GM12878 (cell line): ENCODE measurements at regions of chr5 and their contacts with region 1.

Region 1: GRCh38 chr5:89313804-89314588 is 431.0 kb upstream of the MEF2C start:
- DNase-seq: peak; percentile 99
- ATAC-seq: peak; percentile 96
- H3K4me3 ChIP-seq: no peak overlapping the region
- H3K27ac ChIP-seq: peak overlapping the region; percentile 97
- H3K4me1 ChIP-seq: peaks cover 40% of the 10 kb centered on the region
- H3K27me3 ChIP-seq: no peaks in the 10 kb centered on the region
- CTCF ChIP-seq: no peak
- EP300 ChIP-seq: peak; percentile 95 to 98
- POLR2A ChIP-seq: peak; percentile 36; the same call in 1 of the 2 replicates
- RAD21 ChIP-seq: peak; percentile 40

Region 2: GRCh38 chr5:88474574-88474973 is 839.4 kb before region 1 on chr5:
- CTCF ChIA-PET with region 1: no interaction called
- POLR2A ChIA-PET with region 1: no interaction called
- RAD21 ChIA-PET with region 1: no interaction called
- SMC1A ChIA-PET with region 1: no interaction called
- in situ Hi-C with region 1: no loop called
- intact Hi-C with region 1: no loop called
- DNase-seq: no peak
- ATAC-seq: no peak
- H3K4me3 ChIP-seq: no peak overlapping the region
- H3K27ac ChIP-seq: no peak overlapping the region
- H3K4me1 ChIP-seq: no peaks in the 10 kb centered on the region
- H3K27me3 ChIP-seq: no peaks in the 10 kb centered on the region
- CTCF ChIP-seq: no peak
- EP300 ChIP-seq: no peak
- POLR2A ChIP-seq: no peak
- RAD21 ChIP-seq: no peak

Region 3: DNA sequence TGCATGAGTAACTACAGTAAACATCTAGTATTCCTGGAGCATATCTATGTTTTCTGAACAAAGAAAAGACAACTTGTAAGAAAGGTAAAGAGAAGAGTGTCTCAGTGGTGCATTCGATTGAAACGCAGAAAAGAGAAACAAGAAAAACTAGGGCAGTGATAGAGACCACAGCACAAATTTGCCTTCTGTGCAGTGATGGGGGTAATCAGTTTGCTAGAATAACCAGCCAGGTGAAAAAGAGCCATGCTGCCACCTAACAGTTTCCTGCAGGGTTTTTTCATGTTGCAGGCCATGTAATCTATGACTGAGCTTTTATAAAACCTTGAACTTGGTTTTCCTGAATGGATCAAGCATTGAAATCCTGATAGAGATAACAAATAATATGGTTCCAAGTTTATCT is 232.6 kb before region 1 on chr5:
- CTCF ChIA-PET with region 1: no interaction called
- POLR2A ChIA-PET with region 1: no interaction called
- RAD21 ChIA-PET with region 1: interaction called, 10 read pairs
- SMC1A ChIA-PET with region 1: interaction called, 3 read pairs
- in situ Hi-C with region 1: no loop called
- intact Hi-C with region 1: no loop called
- DNase-seq: peak; percentile 62
- ATAC-seq: peak; percentile 89
- H3K4me3 ChIP-seq: peak overlapping the region; percentile 3; the same call in 1 of the 2 replicates
- H3K27ac ChIP-seq: peak overlapping the region; percentile 55
- H3K4me1 ChIP-seq: peaks cover 11% of the 10 kb centered on the region
- H3K27me3 ChIP-seq: no peaks in the 10 kb centered on the region
- CTCF ChIP-seq: peak in 1 of 3 experiments; percentile 36; a peak in 2 of 6 replicates
- EP300 ChIP-seq: 0 out of 4 replicates have a peak, but pooled peaks of 1 of the 2 experiments have one; percentile 21
- POLR2A ChIP-seq: no peak
- RAD21 ChIP-seq: peak; percentile 54

Region 4: GRCh38 chr5:89128092-89128491 is 185.9 kb before region 1 on chr5:
- CTCF ChIA-PET with region 1: no interaction called
- POLR2A ChIA-PET with region 1: no interaction called
- RAD21 ChIA-PET with region 1: no interaction called
- SMC1A ChIA-PET with region 1: no interaction called
- in situ Hi-C with region 1: no loop called
- intact Hi-C with region 1: no loop called
- DNase-seq: no peak
- ATAC-seq: no peak
- H3K4me3 ChIP-seq: no peak overlapping the region
- H3K27ac ChIP-seq: no peak overlapping the region
- H3K4me1 ChIP-seq: no peaks in the 10 kb centered on the region
- H3K27me3 ChIP-seq: no peaks in the 10 kb centered on the region
- CTCF ChIP-seq: no peak
- EP300 ChIP-seq: no peak
- POLR2A ChIP-seq: no peak
- RAD21 ChIP-seq: no peak

Region 5: DNA sequence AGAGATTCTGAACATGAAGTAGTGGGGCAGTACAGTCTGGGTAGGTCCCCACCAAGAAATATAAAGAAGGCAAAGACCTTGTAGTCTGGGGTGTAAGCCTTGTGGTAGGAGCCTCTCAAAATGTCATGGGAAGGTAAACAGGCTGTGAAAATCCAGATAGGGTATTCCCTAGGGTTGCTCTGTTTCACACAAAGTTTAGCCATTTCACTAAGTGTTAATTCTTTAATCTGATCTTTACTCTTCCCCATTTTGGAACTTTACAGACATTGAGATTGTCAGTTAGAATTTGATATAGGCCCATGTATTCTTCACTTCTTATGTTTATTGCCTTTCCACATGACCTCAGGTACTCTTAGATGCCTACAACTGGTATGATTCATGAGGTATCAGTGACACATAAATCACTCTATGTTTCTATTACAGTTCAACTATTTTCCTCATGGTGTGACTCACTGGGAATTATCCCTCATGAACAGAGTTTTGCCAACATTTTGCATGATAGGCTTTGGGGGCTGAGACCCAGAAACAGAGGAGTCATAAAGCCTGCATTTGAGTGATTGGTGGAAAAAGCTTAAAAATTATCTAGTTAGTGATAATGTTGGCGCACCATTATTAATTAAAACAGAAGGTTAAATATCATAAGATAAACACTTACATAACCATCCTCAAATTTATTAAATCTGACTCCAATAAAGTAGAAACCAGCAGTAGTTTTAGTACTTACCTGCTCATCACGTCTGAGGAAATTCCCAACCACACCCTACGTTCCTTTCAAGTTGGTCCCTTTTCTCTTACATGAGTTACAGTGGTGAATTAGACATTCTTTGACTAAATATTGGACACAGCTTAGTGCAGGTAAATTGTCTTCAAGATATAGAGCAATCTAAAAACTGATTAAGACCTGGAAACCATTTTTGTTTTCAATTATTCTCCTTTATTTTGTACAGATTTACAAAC is 31.2 kb before region 1 on chr5:
- CTCF ChIA-PET with region 1: interaction called, 5 read pairs
- POLR2A ChIA-PET with region 1: interaction called, 4 read pairs
- RAD21 ChIA-PET with region 1: interaction called, 7 read pairs
- SMC1A ChIA-PET with region 1: interaction called, 18 read pairs
- in situ Hi-C with region 1: no loop called
- intact Hi-C with region 1: no loop called
- DNase-seq: peak; percentile 31
- ATAC-seq: peak; percentile 54
- H3K4me3 ChIP-seq: no peak overlapping the region
- H3K27ac ChIP-seq: peak overlapping the region; percentile 59
- H3K4me1 ChIP-seq: peaks cover 40% of the 10 kb centered on the region
- H3K27me3 ChIP-seq: no peaks in the 10 kb centered on the region
- CTCF ChIP-seq: no peak
- EP300 ChIP-seq: peak in 1 of 2 experiments; percentile 30; a peak in 1 of 4 replicates
- POLR2A ChIP-seq: no peak
- RAD21 ChIP-seq: peak; percentile 1; the same call in 1 of the 2 replicates

Region 6: DNA sequence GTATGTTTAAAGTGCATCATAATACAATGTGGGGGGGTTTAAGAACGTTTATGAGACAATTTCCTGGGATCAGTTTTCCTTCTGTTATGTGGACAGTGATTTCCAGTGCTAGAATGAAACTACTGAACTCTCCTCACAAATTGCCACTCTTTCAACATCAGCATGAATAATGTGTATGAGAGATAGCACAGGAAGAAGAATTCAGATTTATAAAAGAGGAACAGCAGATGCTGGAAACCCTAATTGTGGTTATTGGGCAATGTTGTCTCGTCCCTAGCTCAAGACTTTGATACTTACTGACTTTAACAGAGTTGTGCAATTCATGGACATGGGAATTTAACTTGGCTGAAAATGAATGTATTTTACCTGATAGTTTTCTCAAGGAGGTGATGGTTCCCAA is 20.2 kb before region 1 on chr5:
- CTCF ChIA-PET with region 1: interaction called, 3 read pairs
- POLR2A ChIA-PET with region 1: interaction called, 6 read pairs
- RAD21 ChIA-PET with region 1: interaction called, 64 read pairs
- SMC1A ChIA-PET with region 1: interaction called, 11 read pairs
- in situ Hi-C with region 1: no loop called
- intact Hi-C with region 1: no loop called
- DNase-seq: no peak
- ATAC-seq: peak; percentile 34; the same call in 1 of the 3 replicates
- H3K4me3 ChIP-seq: no peak overlapping the region
- H3K27ac ChIP-seq: no peak overlapping the region
- H3K4me1 ChIP-seq: peaks cover 12% of the 10 kb centered on the region; the same call in 1 of the 2 replicates
- H3K27me3 ChIP-seq: no peaks in the 10 kb centered on the region
- CTCF ChIP-seq: no peak
- EP300 ChIP-seq: no peak
- POLR2A ChIP-seq: no peak
- RAD21 ChIP-seq: no peak

Region 7: DNA sequence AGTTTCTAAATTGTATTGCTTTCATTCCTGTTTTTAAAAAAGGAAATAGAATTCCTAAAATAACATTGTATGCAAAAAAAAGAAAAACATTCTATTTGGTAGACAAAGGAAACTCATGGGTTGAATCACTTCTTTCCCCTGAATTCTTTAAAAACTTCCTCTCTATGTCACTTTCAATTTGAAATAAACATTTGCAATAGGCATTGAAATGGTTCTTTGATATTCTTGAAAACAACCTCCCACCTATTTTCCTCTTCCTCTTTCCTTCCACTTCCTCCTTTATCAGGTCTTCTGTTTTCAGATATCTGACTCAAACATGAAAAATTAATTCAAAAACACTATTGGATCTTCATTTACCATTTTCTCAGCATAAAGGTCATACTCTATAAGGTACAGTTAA is 11.0 kb after region 1 on chr5:
- CTCF ChIA-PET with region 1: interaction called, 12 read pairs
- POLR2A ChIA-PET with region 1: interaction called, 3 read pairs
- RAD21 ChIA-PET with region 1: interaction called, 3 read pairs
- SMC1A ChIA-PET with region 1: interaction called, 24 read pairs
- in situ Hi-C with region 1: no loop called
- intact Hi-C with region 1: no loop called
- DNase-seq: no peak
- ATAC-seq: no peak
- H3K4me3 ChIP-seq: no peak overlapping the region
- H3K27ac ChIP-seq: no peak overlapping the region
- H3K4me1 ChIP-seq: peaks cover 6% of the 10 kb centered on the region
- H3K27me3 ChIP-seq: no peaks in the 10 kb centered on the region
- CTCF ChIP-seq: no peak
- EP300 ChIP-seq: no peak
- POLR2A ChIP-seq: no peak
- RAD21 ChIP-seq: no peak

Region 8: DNA sequence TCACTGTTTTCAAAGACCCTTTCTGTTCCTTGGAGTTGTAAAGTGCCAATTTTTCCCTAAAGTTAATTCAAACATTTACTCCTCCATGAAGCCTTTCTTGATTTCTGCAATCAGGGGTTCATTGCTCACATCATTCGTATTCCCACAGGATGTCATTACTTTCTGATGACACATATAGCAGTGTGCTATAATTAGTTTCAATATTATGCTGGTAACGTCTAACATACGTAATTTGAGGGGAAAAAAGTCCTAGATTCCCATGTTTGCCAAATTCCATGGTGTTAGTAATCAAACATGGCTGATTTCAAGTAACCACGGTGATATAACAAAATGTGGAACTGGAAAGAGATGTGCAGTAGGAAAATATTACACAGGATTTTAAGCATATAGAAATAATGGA is 37.2 kb after region 1 on chr5:
- CTCF ChIA-PET with region 1: interaction called, 6 read pairs
- POLR2A ChIA-PET with region 1: interaction called, 3 read pairs
- RAD21 ChIA-PET with region 1: interaction called, 17 read pairs
- SMC1A ChIA-PET with region 1: interaction called, 25 read pairs
- in situ Hi-C with region 1: no loop called
- intact Hi-C with region 1: no loop called
- DNase-seq: no peak
- ATAC-seq: peak; percentile 16
- H3K4me3 ChIP-seq: no peak overlapping the region
- H3K27ac ChIP-seq: peak overlapping the region; percentile 68; the same call in 1 of the 2 replicates
- H3K4me1 ChIP-seq: peaks cover 18% of the 10 kb centered on the region; the same call in 1 of the 2 replicates
- H3K27me3 ChIP-seq: no peaks in the 10 kb centered on the region
- CTCF ChIP-seq: no peak
- EP300 ChIP-seq: 0 out of 4 replicates have a peak, but pooled peaks of 1 of the 2 experiments have one; percentile 54
- POLR2A ChIP-seq: no peak
- RAD21 ChIP-seq: no peak

Region 9: DNA sequence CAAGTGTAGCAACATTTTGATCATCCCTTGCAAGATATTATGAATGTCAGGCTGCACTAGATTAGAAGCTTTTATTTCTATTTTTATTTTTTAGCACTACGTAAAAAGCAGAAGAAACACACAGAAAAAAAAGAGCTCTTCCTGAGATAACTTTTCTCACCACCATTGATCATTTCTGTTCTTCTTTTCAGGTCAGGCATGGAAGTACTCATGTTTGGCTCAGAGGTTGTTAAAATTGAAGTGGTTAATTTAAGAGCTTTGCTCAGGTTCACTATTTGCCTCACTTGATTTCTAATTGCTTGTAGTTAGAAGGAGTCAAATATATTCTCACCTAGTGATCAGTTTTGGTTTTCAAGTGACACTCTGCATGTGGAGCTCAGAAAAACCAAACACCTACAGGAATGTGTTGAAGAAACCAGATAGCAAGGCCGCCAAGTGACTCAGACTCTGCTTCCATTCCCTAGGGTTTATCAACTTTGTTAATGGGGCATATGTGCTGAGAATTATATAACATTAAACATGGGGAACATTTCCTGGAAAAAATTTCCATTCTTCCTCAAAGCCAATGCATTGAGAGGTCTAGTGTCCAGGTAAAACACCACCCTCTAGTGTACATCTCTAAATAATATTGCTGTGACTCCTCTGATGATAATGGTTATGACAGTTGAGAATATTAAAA is 415.8 kb after region 1 on chr5:
- CTCF ChIA-PET with region 1: interaction called, 10 read pairs
- POLR2A ChIA-PET with region 1: no interaction called
- RAD21 ChIA-PET with region 1: interaction called, 13 read pairs
- SMC1A ChIA-PET with region 1: interaction called, 11 read pairs
- in situ Hi-C with region 1: no loop called
- intact Hi-C with region 1: no loop called
- DNase-seq: peak; percentile 34
- ATAC-seq: peak; percentile 76
- H3K4me3 ChIP-seq: no peak overlapping the region
- H3K27ac ChIP-seq: no peak overlapping the region
- H3K4me1 ChIP-seq: peaks cover 7% of the 10 kb centered on the region; the same call in 1 of the 2 replicates
- H3K27me3 ChIP-seq: no peaks in the 10 kb centered on the region
- CTCF ChIP-seq: peak; percentile 26 to 54 (median 27); a peak in 4 of 6 replicates
- EP300 ChIP-seq: no peak
- POLR2A ChIP-seq: no peak
- RAD21 ChIP-seq: peak; percentile 65